PC-3 (cell line): ENCODE measurements at regions of chr6 and their contacts with region 1.

Region 1: GRCh38 chr6:47134476-47135189 is 92.5 kb upstream of the ADGRF1 start:
- DNase-seq: peak; percentile 99
- ATAC-seq: peak; percentile 72
- H3K4me3 ChIP-seq: peak overlapping the region; percentile 39
- H3K27ac ChIP-seq: peak overlapping the region; percentile 96
- H3K4me1 ChIP-seq: peaks cover 32% of the 10 kb centered on the region
- H3K27me3 ChIP-seq: no peaks in the 10 kb centered on the region
- CTCF ChIP-seq: no peak

Region 2: DNA sequence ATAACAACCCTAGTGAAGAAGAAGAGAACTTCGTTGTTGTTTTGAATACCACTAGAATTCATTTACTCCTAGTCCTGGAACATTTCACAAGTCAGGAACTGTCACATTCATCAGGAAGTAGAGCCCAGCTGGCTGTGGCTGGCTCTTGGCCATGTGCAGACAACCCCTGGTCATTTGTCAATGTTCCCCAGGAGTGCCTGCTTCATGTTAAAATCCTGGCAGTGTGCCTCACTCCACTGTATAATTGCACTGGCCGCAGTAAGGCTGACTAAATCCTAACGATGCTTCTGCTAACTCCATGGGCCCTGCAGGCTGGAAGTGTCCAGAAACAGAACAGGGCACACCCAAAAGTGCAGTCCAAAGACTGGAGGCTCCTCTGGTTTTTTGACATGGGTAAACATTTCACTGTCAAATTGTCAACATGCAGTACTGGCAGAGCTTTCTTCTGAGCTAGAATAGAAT is 51.0 kb before region 1 on chr6:
- CTCF ChIA-PET with region 1: no interaction called
- POLR2A ChIA-PET with region 1: no interaction called
- intact Hi-C with region 1: no loop called
- DNase-seq: peak; percentile 47
- ATAC-seq: peak; percentile 70
- H3K4me3 ChIP-seq: no peak overlapping the region
- H3K27ac ChIP-seq: no peak overlapping the region
- H3K4me1 ChIP-seq: no peaks in the 10 kb centered on the region
- H3K27me3 ChIP-seq: no peaks in the 10 kb centered on the region
- CTCF ChIP-seq: no peak

Region 3: DNA sequence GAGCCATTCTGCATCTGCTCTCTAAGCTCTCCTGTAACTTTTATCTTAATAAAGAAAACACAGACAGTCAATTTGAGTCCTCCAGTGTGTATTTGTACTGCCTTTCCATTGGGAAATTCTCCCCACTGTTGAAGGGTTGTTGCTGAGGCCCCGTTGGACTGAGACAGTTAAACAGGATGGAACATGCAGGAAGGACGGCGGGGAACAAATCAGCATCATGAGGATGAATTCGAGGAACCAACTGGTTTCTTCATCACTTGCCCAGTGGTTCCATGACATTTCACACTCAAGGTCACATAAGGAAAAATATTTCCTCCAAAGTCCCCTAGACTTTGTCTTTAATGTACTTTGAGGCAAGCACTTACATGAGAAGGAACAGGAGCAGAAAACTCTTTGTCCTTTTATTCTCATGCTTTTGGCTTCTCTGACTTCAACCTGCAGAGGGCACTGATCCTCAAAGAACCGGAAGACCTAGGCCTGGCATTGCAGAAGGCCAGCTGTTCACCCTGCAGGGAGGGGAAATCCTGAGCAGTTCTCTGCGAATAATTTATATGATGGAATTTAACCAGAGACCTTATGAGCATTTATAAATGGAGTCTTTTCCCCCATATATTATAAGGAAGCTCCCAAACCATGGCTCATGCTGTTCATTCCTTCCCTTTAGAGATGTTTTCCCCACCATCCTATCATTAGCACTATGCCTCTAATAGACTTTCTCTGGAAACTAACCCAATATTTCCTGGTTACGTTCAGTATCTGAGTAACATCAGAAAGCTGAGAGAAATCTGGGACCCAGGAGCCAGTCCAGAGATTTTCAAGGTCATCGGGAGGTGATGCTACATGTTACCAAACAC is 37.3 kb before region 1 on chr6:
- CTCF ChIA-PET with region 1: interaction called, 6 read pairs
- POLR2A ChIA-PET with region 1: no interaction called
- intact Hi-C with region 1: loop called (anchors 1 kb)
- DNase-seq: peak; percentile 88
- ATAC-seq: peak; percentile 80
- H3K4me3 ChIP-seq: no peak overlapping the region
- H3K27ac ChIP-seq: peak overlapping the region; percentile 53
- H3K4me1 ChIP-seq: peaks cover 50% of the 10 kb centered on the region
- H3K27me3 ChIP-seq: no peaks in the 10 kb centered on the region
- CTCF ChIP-seq: peak; percentile 90

Region 4: DNA sequence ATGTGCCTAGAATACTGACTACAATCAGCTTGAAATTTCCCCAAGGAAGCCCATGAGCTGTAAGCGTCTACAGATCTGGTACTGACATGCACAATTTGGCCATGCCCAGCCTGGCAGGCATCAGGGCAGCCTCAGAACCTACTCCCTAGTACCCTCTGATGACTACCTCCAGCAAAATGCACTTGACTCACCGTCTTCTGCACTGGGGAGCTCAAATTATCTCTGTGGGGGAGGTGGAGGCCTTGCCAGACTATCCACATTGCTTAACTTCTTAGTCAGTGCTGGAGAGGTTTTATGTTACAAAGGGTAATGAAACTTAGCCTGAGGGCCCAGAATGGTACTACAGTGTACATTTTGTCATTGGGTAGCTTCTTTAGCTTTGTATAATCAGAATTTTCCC is 33.5 kb after region 1 on chr6:
- CTCF ChIA-PET with region 1: interaction called, 3 read pairs
- POLR2A ChIA-PET with region 1: no interaction called
- intact Hi-C with region 1: loop called (anchors 1 kb)
- DNase-seq: peak; percentile 98
- ATAC-seq: peak; percentile 99
- H3K4me3 ChIP-seq: no peak overlapping the region
- H3K27ac ChIP-seq: peak overlapping the region; percentile 91
- H3K4me1 ChIP-seq: peaks cover 50% of the 10 kb centered on the region
- H3K27me3 ChIP-seq: no peaks in the 10 kb centered on the region
- CTCF ChIP-seq: no peak

Region 5: DNA sequence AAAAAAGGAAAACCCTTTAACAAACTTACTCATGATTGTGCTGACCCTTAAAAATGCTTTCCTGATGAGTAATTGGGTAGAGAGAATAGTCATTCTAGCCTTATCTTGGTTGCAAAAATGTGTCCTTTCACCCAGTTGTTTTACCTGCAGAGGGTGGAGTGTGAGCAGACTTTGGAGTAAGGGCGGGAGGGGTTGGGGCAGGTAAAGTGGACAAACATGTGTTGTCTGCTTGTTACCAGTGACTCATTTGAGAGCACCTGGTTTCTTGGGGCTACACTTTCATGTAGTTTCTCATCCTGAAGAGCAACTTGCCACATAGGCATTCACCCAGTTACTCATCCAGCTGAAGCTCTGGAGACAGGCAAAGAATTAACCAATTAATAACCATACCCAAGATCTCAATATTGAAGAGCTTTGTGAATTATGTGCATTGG is 54.0 kb after region 1 on chr6:
- CTCF ChIA-PET with region 1: interaction called, 3 read pairs
- POLR2A ChIA-PET with region 1: no interaction called
- intact Hi-C with region 1: loop called (anchors 1 kb)
- DNase-seq: peak; percentile 97
- ATAC-seq: peak; percentile 91
- H3K4me3 ChIP-seq: 0 out of 2 replicates have a peak overlapping the region, but pooled peaks have one; percentile 25
- H3K27ac ChIP-seq: peak overlapping the region; percentile 82
- H3K4me1 ChIP-seq: peaks cover 33% of the 10 kb centered on the region
- H3K27me3 ChIP-seq: no peaks in the 10 kb centered on the region
- CTCF ChIP-seq: no peak

Region 6: GRCh38 chr6:47298475-47298874 is 163.8 kb after region 1 on chr6:
- CTCF ChIA-PET with region 1: no interaction called
- POLR2A ChIA-PET with region 1: no interaction called
- intact Hi-C with region 1: loop called (anchors 2 kb)
- DNase-seq: no peak
- ATAC-seq: peak; percentile 52
- H3K4me3 ChIP-seq: no peak overlapping the region
- H3K27ac ChIP-seq: peak overlapping the region; percentile 53
- H3K4me1 ChIP-seq: peaks cover 30% of the 10 kb centered on the region
- H3K27me3 ChIP-seq: no peaks in the 10 kb centered on the region
- CTCF ChIP-seq: no peak